Calu3 (cell line): ENCODE measurements at regions of chr9 and their contacts with region 1.

Region 1: GRCh38 chr9:4297151-4297785 is 2.6 kb downstream of the GLIS3 start:
- DNase-seq: peak; percentile 80
- H3K4me3 Mint-ChIP-seq: peak overlapping the region; percentile 85
- H3K27ac Mint-ChIP-seq: peak overlapping the region; percentile 97
- H3K4me1 Mint-ChIP-seq: peaks cover 47% of the 10 kb centered on the region
- H3K27me3 Mint-ChIP-seq: no peaks in the 10 kb centered on the region
- CTCF ChIP-seq: no peak

Region 2: GRCh38 chr9:4147476-4148230 is 149.6 kb before region 1 on chr9:
- CTCF ChIA-PET with region 1: interaction called, 4 read pairs
- intact Hi-C with region 1: loop called (anchors 5 kb)
- DNase-seq: peak; percentile 29
- H3K4me3 Mint-ChIP-seq: peak overlapping the region; percentile 29
- H3K27ac Mint-ChIP-seq: peak overlapping the region; percentile 61
- H3K4me1 Mint-ChIP-seq: peaks cover 56% of the 10 kb centered on the region
- H3K27me3 Mint-ChIP-seq: no peaks in the 10 kb centered on the region
- CTCF ChIP-seq: no peak

Region 3: DNA sequence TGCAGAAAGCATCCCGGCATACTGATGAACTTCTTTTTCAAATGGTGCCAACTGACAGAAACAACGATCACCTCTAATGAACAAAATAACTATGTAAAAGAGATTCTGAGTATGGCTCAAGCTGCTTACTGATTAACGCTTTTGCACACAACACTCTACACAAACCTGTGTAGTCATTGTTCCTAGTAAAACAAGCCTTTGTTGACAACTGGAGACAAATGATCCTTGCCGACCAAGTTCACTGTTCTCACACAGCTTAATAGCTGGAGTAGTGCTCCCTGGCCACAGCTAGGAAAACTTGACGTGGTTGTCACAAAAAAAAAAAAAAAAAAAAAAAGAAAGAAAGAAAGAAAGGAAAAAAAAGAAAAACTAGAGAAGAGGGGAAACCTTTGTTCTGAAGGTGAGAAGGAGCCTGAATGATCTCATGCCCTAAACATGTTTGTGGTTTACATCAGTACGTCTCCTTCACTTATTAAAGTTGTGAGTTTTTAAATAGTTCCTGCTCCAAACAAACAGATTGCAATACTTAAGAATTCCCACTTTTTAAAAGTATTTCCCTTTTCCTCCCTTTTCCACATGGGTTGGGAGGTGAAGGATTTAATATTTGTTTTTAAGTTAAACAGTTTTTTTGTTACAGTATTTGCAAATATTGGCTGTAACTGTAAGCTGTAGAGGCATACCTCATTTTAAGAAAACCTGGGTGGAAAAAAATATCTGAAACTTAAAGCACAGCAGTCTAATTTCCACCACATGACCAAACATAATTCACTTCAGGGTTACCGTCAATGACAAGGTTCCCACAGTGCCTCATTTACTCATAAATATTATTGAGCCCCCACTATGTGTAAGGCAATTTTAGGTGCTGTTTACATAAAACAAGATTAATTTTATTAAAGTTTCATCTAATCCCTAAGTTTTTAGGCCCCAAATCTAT is 61.1 kb before region 1 on chr9:
- CTCF ChIA-PET with region 1: no interaction called
- intact Hi-C with region 1: loop called (anchors 2 kb)
- DNase-seq: peak; percentile 39
- H3K4me3 Mint-ChIP-seq: peak overlapping the region; percentile 64
- H3K27ac Mint-ChIP-seq: peak overlapping the region; percentile 89
- H3K4me1 Mint-ChIP-seq: peaks cover 27% of the 10 kb centered on the region
- H3K27me3 Mint-ChIP-seq: no peaks in the 10 kb centered on the region
- CTCF ChIP-seq: no peak

Region 4: DNA sequence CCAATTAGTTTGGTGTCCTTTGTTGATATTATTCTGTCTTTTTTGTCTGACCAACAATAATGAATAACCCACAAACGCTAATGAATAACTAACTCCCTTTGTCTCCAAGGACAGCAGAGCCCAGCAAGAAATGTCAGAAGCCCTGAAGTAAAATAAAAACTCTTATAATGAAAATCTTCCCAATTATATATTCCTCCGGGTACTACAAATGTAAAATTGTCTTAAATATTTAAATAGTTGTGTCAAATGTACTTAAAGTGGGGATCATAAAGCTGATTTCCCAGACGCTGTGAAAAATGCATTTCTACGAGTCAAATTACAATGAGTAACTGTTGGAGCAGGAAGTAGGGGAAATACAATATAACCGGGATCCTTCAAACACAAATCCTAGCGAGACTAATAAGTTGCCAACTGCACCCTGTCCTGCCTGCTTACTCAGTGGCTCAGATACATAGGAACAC is 19.7 kb before region 1 on chr9:
- CTCF ChIA-PET with region 1: interaction called, 3 read pairs
- intact Hi-C with region 1: loop called (anchors 2 kb)
- DNase-seq: peak; percentile 15
- H3K4me3 Mint-ChIP-seq: peak overlapping the region; percentile 33
- H3K27ac Mint-ChIP-seq: peak overlapping the region; percentile 87
- H3K4me1 Mint-ChIP-seq: peaks cover 34% of the 10 kb centered on the region
- H3K27me3 Mint-ChIP-seq: no peaks in the 10 kb centered on the region
- CTCF ChIP-seq: no peak

Region 5: DNA sequence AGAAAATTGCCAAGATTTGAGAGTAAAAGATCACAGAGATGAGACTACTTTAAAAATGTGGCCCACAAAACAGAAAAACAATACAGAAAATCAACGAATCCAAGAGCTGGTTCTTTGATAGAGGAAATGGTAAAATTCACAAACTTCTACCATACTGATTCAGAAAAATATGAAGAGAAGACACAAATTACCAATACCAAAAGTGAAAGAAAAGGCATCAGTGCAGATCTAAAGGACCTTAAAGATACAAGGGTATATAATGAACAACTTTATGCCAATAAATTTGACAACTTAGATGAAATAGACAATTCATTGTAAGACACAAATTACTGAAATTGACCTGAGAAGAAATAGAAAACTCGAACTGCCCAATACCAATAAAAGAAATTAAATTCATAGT is 168.6 kb after region 1 on chr9:
- CTCF ChIA-PET with region 1: no interaction called
- intact Hi-C with region 1: no loop called
- DNase-seq: no peak
- H3K4me3 Mint-ChIP-seq: no peak overlapping the region
- H3K27ac Mint-ChIP-seq: no peak overlapping the region
- H3K4me1 Mint-ChIP-seq: peaks cover 20% of the 10 kb centered on the region
- H3K27me3 Mint-ChIP-seq: no peaks in the 10 kb centered on the region
- CTCF ChIP-seq: no peak